Activated CD4-positive, alpha-beta T cell treated with anti-CD3 and anti-CD28 coated beads, Interleukin-2, amount 10 ng/mL, durations not matched to agents 24 days and 14 days (primary cell): ENCODE measurements at regions of chr14 and their contacts with region 1.

Region 1: DNA sequence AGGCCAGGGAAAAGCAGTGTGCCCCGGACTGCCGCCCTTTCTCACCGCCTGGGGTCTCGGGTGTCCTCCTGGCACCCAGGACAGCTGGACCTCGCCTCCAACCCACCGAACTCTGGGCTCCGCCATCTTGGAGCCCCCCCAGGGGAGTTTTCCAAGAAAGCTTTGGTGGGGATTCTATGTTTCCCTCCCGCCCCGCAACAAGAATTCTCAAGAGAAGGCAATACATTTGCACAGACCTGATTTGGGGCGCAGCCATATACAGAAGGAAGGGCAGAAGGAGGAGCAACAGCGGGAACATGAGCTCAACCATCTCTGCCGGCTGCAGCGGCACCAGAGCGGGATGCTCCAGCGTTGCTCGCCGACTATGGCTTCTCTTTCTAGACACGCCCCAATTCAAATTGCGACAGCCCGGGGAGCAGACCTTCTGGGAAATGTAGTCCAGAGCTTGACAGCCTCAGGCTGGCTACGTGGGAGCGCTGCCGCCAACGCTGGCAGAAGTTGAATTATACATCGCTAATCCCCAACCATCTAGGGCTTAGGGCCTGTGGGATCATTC is at the start of gene RDH11:
- DNase-seq: peak; percentile 95
- H3K4me3 Mint-ChIP-seq: peak within 1 kb of the TSS; percentile 89
- H3K27ac Mint-ChIP-seq: peak within 1 kb of the TSS; percentile 97
- H3K4me1 Mint-ChIP-seq: peaks cover 28% of the 10 kb centered on the region
- H3K27me3 Mint-ChIP-seq: no peaks in the 10 kb centered on the region
- total RNA-seq, gene RDH11: 66.2 and 67.7 TPM in 2 replicates

Region 2: GRCh38 chr14:67396501-67396900 is 299.0 kb before region 1 on chr14:
- intact Hi-C with region 1: no loop called
- DNase-seq: no peak
- H3K4me3 Mint-ChIP-seq: no peak overlapping the region
- H3K27ac Mint-ChIP-seq: no peak overlapping the region
- H3K4me1 Mint-ChIP-seq: no peaks in the 10 kb centered on the region
- H3K27me3 Mint-ChIP-seq: peaks cover 10% of the 10 kb centered on the region

Region 3: GRCh38 chr14:67599698-67600561 is 95.5 kb before region 1 on chr14 and contains the start of gene PIGH:
- intact Hi-C with region 1: loop called (anchors 1 kb)
- DNase-seq: peak; percentile 99
- H3K4me3 Mint-ChIP-seq: peak within 1 kb of the TSS; percentile 90
- H3K27ac Mint-ChIP-seq: peak within 1 kb of the TSS; percentile 96
- H3K4me1 Mint-ChIP-seq: peaks cover 31% of the 10 kb centered on the region
- H3K27me3 Mint-ChIP-seq: peaks cover 14% of the 10 kb centered on the region
- total RNA-seq, gene PIGH: 21.2 and 22.7 TPM in 2 replicates

Region 4: DNA sequence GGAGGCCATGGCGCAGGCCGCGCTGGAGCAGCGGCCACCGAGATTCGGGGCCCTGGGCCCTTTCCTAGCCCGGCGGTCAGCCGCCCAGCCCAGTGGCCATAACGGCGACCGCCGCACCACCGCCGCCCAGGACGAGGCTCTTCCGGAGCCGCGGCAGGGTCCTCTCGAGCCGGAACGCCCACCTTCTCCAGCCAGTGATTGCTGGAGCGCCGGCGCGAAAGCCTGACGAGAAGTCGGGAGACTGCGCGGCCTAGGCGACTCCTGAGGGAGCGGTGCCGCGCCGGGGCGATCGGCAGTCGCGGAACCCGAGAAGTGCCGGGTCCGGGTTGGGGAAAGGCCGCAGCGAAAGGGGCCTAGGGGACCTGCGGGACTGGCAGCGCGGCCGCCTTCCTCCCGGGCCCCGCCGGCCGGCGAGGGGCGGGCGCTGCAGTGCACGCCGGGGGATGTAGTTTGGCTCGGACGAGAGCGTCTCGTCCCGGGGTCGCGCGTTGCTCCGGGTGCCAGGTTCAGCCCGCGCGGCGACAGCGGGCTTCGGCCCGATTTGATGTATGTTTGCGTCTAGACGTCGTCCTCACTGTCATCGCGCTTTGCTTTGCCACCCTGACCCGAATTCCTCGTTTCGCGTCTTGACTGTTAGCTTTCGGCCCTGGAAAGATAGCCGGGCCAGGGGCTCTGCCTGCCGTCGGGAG is 20.8 kb before region 1 on chr14 and contains the start of gene VTI1B:
- intact Hi-C with region 1: loop called (anchors 1 kb)
- DNase-seq: peak; percentile 93
- H3K4me3 Mint-ChIP-seq: peak within 1 kb of the TSS; percentile 90
- H3K27ac Mint-ChIP-seq: peak within 1 kb of the TSS; percentile 90
- H3K4me1 Mint-ChIP-seq: peaks cover 35% of the 10 kb centered on the region
- H3K27me3 Mint-ChIP-seq: no peaks in the 10 kb centered on the region
- total RNA-seq, gene VTI1B: 75.3 and 78.5 TPM in 2 replicates

Region 5: GRCh38 chr14:67816326-67817002 is 121.0 kb after region 1 on chr14 and contains the start of gene ZFYVE26:
- intact Hi-C with region 1: loop called (anchors 1 kb)
- DNase-seq: peak; percentile 97
- H3K4me3 Mint-ChIP-seq: peak within 1 kb of the TSS; percentile 89
- H3K27ac Mint-ChIP-seq: peak within 1 kb of the TSS; percentile 93
- H3K4me1 Mint-ChIP-seq: peaks cover 36% of the 10 kb centered on the region
- H3K27me3 Mint-ChIP-seq: no peaks in the 10 kb centered on the region
- total RNA-seq, gene ZFYVE26: 13.5 and 15.8 TPM in 2 replicates

Region 6: GRCh38 chr14:68172627-68173026 is 477.2 kb after region 1 on chr14:
- intact Hi-C with region 1: no loop called
- DNase-seq: no peak
- H3K4me3 Mint-ChIP-seq: no peak overlapping the region
- H3K27ac Mint-ChIP-seq: no peak overlapping the region
- H3K4me1 Mint-ChIP-seq: no peaks in the 10 kb centered on the region
- H3K27me3 Mint-ChIP-seq: no peaks in the 10 kb centered on the region